ENCODE measurements at regions of chr9 and their contacts with region 1.

Region 1: GRCh38 chr9:109401168-109401989 is 80.5 kb upstream of the EPB41L4B start:
- DNase-seq: peak in 5 of 6 donors; percentile 48 to 78 (median 70)
- ATAC-seq: peak; percentile 85 to 96 (median 88)
- H3K4me3 ChIP-seq: no peak overlapping the region
- H3K27ac ChIP-seq: no peak overlapping the region
- H3K4me1 ChIP-seq: no peaks in the 10 kb centered on the region
- H3K27me3 ChIP-seq: no peaks in the 10 kb centered on the region
- CTCF ChIP-seq: peak; percentile 54 to 70 (median 60)

Region 2: DNA sequence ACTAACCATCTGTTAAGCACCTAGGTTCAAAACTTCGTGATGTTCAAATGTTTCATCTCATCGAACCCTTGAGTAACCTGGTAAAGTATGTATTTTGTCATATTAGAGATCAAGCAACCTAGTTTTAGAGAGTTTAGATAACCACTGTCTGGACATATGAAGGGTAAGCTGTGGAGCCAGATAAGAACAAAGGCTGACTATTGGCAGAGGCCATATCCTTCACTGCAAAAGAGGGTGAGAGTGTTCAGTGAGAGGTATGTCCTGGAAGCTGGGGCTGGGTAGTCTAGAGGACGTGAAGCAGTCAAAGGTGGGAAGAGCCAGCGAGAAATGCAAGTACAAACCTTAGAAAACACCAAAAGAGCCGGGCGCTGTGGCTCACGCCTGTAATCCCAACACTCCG is 1338.7 kb before region 1 on chr9:
- intact Hi-C with region 1: no loop called
- DNase-seq: no peak
- ATAC-seq: no peak
- H3K4me3 ChIP-seq: no peak overlapping the region
- H3K27ac ChIP-seq: no peak overlapping the region
- H3K4me1 ChIP-seq: no peaks in the 10 kb centered on the region
- H3K27me3 ChIP-seq: peaks cover 0 to 2% (median 0%) of the 10 kb centered on the region in 4 donors
- CTCF ChIP-seq: no peak

Region 3: GRCh38 chr9:109192732-109193361 is 208.5 kb before region 1 on chr9:
- intact Hi-C with region 1: loop called in 1 of 3 experiments (anchors 5 kb)
- DNase-seq: peak in 5 of 6 donors; percentile 47 to 70 (median 59)
- ATAC-seq: peak; percentile 88 to 99 (median 96)
- H3K4me3 ChIP-seq: no peak overlapping the region
- H3K27ac ChIP-seq: no peak overlapping the region
- H3K4me1 ChIP-seq: no peaks in the 10 kb centered on the region
- H3K27me3 ChIP-seq: no peaks in the 10 kb centered on the region
- CTCF ChIP-seq: peak in 3 of 4 donors; percentile 17 to 40 (median 31)

Measured in pancreas (tissue), 10 donors.